ENCODE measurements at regions of chr1 and their contacts with region 1.

Region 1: DNA sequence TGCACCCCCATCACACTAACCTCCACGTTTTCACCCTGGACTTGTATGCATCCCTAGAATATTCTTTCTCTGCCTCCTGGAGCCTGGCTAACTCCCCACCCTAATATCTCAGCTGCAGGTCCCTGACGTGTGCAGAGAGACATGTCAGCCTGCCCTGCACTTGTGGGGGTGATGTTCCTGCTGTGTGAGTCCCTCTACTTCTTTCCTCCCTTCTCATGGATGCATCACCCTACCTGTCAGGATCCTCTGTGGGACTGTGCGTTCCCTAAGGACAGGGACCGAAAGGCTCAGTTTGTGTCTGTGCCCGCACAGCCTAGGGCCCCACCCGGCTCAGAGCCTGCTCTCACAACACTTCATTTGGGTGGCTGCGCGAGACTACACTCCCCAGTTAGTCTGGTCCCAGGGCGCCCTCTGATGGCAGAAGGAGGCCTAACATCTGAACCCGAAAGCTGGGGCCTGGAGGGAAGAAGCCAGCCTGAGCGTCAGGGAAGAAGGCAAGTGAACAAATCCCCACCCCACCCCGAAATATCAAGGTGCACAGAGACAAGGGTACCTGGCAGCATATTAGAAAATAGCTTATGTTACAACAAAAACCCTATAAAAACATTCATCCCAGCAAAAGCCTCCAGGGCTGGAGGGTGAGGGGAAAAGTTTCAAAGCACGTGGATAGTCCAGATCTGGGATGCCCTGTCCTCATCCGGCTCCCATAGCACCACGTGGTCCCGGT is 3.7 kb downstream of the CD52 start:
- DNase-seq: peak; percentile 90 to 99 (median 94)
- ATAC-seq: peak; percentile 76
- H3K4me3 ChIP-seq: peak overlapping the region; percentile 99
- H3K4me3 Mint-ChIP-seq: peak overlapping the region; percentile 97
- H3K27ac ChIP-seq: peak overlapping the region; percentile 52 to 82
- H3K27ac Mint-ChIP-seq: peak overlapping the region; percentile 86
- H3K4me1 ChIP-seq: peaks cover 47% of the 10 kb centered on the region
- H3K4me1 Mint-ChIP-seq: peaks cover 60% of the 10 kb centered on the region
- H3K27me3 ChIP-seq: no peaks in the 10 kb centered on the region
- H3K27me3 Mint-ChIP-seq: no peaks in the 10 kb centered on the region
- CTCF ChIP-seq: peak; percentile 93

Region 2: DNA sequence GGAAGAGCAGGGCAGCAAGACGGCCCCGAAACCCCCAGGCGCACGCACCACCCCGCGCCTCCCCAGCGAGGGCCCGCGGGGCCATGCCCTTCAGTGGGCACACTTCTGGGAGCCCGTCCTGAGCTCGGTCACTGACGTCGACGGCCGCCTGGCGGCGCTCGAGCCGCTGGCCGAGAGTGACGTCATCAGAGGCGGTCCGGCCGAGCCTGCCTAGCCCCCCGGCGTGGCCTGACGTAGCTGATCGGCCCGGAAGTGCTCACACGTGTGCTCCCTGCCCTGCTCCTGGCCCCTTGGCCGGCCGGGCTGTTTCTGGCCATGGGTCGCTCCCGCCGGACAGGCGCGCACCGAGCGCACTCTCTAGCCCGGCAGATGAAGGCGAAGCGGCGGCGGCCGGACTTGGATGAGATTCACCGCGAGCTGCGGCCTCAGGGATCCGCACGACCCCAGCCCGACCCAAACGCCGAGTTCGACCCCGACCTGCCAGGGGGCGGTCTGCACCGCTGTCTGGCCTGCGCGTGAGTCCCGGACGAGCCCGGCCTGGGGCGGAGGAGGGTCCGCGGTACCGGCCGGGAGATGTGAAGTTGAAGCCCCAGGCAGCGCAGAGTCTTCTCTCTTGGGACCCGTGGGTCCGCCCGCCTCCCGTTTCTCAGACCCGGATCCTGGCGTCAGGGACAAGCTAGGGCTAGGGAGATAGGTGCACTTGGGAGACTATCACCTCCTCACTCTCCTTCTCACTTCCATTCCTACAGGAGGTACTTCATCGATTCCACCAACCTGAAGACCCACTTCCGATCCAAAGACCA is 151.6 kb before region 1 on chr1 and contains the start of gene ZNF593:
- CTCF ChIA-PET with region 1: interaction called, 8 read pairs
- POLR2A ChIA-PET with region 1: interaction called, 4 read pairs
- intact Hi-C with region 1: loop called (anchors 2 to 5 kb)
- DNase-seq: peak; percentile 61 to 91 (median 77)
- ATAC-seq: peak; percentile 86
- H3K4me3 ChIP-seq: peak within 1 kb of the TSS; percentile 85
- H3K4me3 Mint-ChIP-seq: peak within 1 kb of the TSS; percentile 90
- H3K27ac ChIP-seq: peak within 1 kb of the TSS; percentile 58 to 71
- H3K27ac Mint-ChIP-seq: peak within 1 kb of the TSS; percentile 61
- H3K4me1 ChIP-seq: peaks cover 26% of the 10 kb centered on the region
- H3K4me1 Mint-ChIP-seq: peaks cover 12% of the 10 kb centered on the region
- H3K27me3 ChIP-seq: no peaks in the 10 kb centered on the region
- H3K27me3 Mint-ChIP-seq: no peaks in the 10 kb centered on the region
- CTCF ChIP-seq: peak; percentile 90
- total RNA-seq, gene ZNF593: 5.0 to 6.6 TPM

Region 3: GRCh38 chr1:26279456-26280332 is 41.8 kb before region 1 on chr1 and contains the start of gene SH3BGRL3:
- CTCF ChIA-PET with region 1: interaction called, 223 read pairs
- POLR2A ChIA-PET with region 1: interaction called, 977 read pairs
- intact Hi-C with region 1: loop called (anchors 1 kb)
- DNase-seq: peak; percentile 67 to 93 (median 86)
- ATAC-seq: peak; percentile 63
- H3K4me3 ChIP-seq: peak within 1 kb of the TSS; percentile 72
- H3K4me3 Mint-ChIP-seq: peak within 1 kb of the TSS; percentile 92
- H3K27ac ChIP-seq: peak within 1 kb of the TSS; percentile 84 to 91
- H3K27ac Mint-ChIP-seq: peak within 1 kb of the TSS; percentile 95
- H3K4me1 ChIP-seq: peaks cover 90% of the 10 kb centered on the region
- H3K4me1 Mint-ChIP-seq: peaks cover 83% of the 10 kb centered on the region
- H3K27me3 ChIP-seq: no peaks in the 10 kb centered on the region
- H3K27me3 Mint-ChIP-seq: no peaks in the 10 kb centered on the region
- CTCF ChIP-seq: no peak
- total RNA-seq, gene SH3BGRL3: 178 to 193 TPM

Region 4: GRCh38 chr1:26306290-26307229 is 14.9 kb before region 1 on chr1 and contains the start of gene UBXN11:
- CTCF ChIA-PET with region 1: interaction called, 16 read pairs
- POLR2A ChIA-PET with region 1: interaction called, 200 read pairs
- intact Hi-C with region 1: loop called in 1 of 2 experiments (anchors 1 kb)
- DNase-seq: peak; percentile 81 to 97 (median 88)
- ATAC-seq: peak; percentile 94
- H3K4me3 ChIP-seq: peak within 1 kb of the TSS; percentile 77
- H3K4me3 Mint-ChIP-seq: peak within 1 kb of the TSS; percentile 94
- H3K27ac ChIP-seq: peak within 1 kb of the TSS; percentile 65 to 67
- H3K27ac Mint-ChIP-seq: peak within 1 kb of the TSS; percentile 87
- H3K4me1 ChIP-seq: peaks cover 41% of the 10 kb centered on the region
- H3K4me1 Mint-ChIP-seq: peaks cover 34% of the 10 kb centered on the region
- H3K27me3 ChIP-seq: no peaks in the 10 kb centered on the region
- H3K27me3 Mint-ChIP-seq: no peaks in the 10 kb centered on the region
- CTCF ChIP-seq: no peak
- total RNA-seq, gene UBXN11: 39.3 to 42.3 TPM

Region 5: GRCh38 chr1:26363549-26364448 is 42.3 kb after region 1 on chr1:
- CTCF ChIA-PET with region 1: interaction called, 16 read pairs
- POLR2A ChIA-PET with region 1: interaction called, 9 read pairs
- intact Hi-C with region 1: loop called in 1 of 2 experiments (anchors 5 kb)
- DNase-seq: peak; percentile 74 to 96 (median 84)
- ATAC-seq: peak; percentile 61
- H3K4me3 ChIP-seq: no peak overlapping the region
- H3K4me3 Mint-ChIP-seq: peak overlapping the region; percentile 69
- H3K27ac ChIP-seq: no peak overlapping the region
- H3K27ac Mint-ChIP-seq: no peak overlapping the region
- H3K4me1 ChIP-seq: peaks cover 79% of the 10 kb centered on the region
- H3K4me1 Mint-ChIP-seq: peaks cover 56% of the 10 kb centered on the region
- H3K27me3 ChIP-seq: peaks cover 0 to 21% of the 10 kb centered on the region in 2 experiments
- H3K27me3 Mint-ChIP-seq: peaks cover 28% of the 10 kb centered on the region
- CTCF ChIP-seq: peak; percentile 98

Region 6: DNA sequence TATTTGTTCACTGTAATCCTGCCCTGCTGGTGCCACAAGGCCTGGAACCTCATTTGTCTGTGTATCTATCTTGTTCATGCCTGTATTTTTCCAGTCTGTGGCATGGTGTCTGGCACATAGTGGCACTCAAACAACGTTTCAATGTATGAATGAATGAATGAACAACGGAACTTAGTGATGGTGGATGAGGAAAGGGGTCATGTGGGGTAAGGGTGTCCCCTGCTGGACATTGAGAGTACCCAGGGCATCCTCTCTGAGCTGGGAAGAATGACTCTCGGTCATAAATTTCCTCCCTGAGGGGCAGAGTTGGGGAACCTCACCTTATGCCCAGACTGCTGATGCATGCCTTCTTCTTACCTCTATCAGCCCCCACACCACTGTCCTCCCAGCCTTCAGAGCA is 70.0 kb after region 1 on chr1:
- CTCF ChIA-PET with region 1: interaction called, 19 read pairs
- POLR2A ChIA-PET with region 1: interaction called, 4 read pairs
- intact Hi-C with region 1: loop called in 1 of 2 experiments (anchors 1 kb)
- DNase-seq: peak in 12 of 14 experiments; percentile 21 to 80 (median 36)
- ATAC-seq: peak; percentile 69
- H3K4me3 ChIP-seq: no peak overlapping the region
- H3K4me3 Mint-ChIP-seq: no peak overlapping the region
- H3K27ac ChIP-seq: no peak overlapping the region
- H3K27ac Mint-ChIP-seq: no peak overlapping the region
- H3K4me1 ChIP-seq: peaks cover 41% of the 10 kb centered on the region
- H3K4me1 Mint-ChIP-seq: peaks cover 20% of the 10 kb centered on the region
- H3K27me3 ChIP-seq: no peaks in the 10 kb centered on the region
- H3K27me3 Mint-ChIP-seq: no peaks in the 10 kb centered on the region
- CTCF ChIP-seq: peak; percentile 68

Region 7: GRCh38 chr1:26417111-26417759 is 95.8 kb after region 1 on chr1:
- CTCF ChIA-PET with region 1: interaction called, 14 read pairs
- POLR2A ChIA-PET with region 1: interaction called, 5 read pairs
- intact Hi-C with region 1: loop called in 1 of 2 experiments (anchors 2 kb)
- DNase-seq: peak; percentile 78 to 91 (median 82)
- ATAC-seq: peak; percentile 100
- H3K4me3 ChIP-seq: no peak overlapping the region
- H3K4me3 Mint-ChIP-seq: no peak overlapping the region
- H3K27ac ChIP-seq: no peak overlapping the region
- H3K27ac Mint-ChIP-seq: no peak overlapping the region
- H3K4me1 ChIP-seq: no peaks in the 10 kb centered on the region
- H3K4me1 Mint-ChIP-seq: no peaks in the 10 kb centered on the region
- H3K27me3 ChIP-seq: peaks cover 19 to 27% of the 10 kb centered on the region in 2 experiments
- H3K27me3 Mint-ChIP-seq: peaks cover 40% of the 10 kb centered on the region
- CTCF ChIP-seq: peak; percentile 95

Measured in CD4-positive, alpha-beta T cell (primary cell).